Aorta (tissue), 5 donors: ENCODE measurements at regions of chr11 and their contacts with region 1.

Region 1: GRCh38 chr11:15988693-15989231 is 367.6 kb downstream of the SOX6 start:
- DNase-seq: no peak
- ATAC-seq: peak; percentile 38
- H3K4me3 ChIP-seq: no peak overlapping the region
- H3K27ac ChIP-seq: no peak overlapping the region
- H3K4me1 ChIP-seq: no peaks in the 10 kb centered on the region
- H3K27me3 ChIP-seq: no peaks in the 10 kb centered on the region

Region 2: GRCh38 chr11:15819679-15820286 is 169.0 kb before region 1 on chr11:
- intact Hi-C with region 1: loop called in 1 of 2 experiments (anchors 10 kb)
- DNase-seq: peak; percentile 79 to 89
- ATAC-seq: peak; percentile 82
- H3K4me3 ChIP-seq: no peak overlapping the region
- H3K27ac ChIP-seq: no peak overlapping the region
- H3K4me1 ChIP-seq: peaks cover 4 to 7% of the 10 kb centered on the region in 2 donors
- H3K27me3 ChIP-seq: no peaks in the 10 kb centered on the region

Region 3: DNA sequence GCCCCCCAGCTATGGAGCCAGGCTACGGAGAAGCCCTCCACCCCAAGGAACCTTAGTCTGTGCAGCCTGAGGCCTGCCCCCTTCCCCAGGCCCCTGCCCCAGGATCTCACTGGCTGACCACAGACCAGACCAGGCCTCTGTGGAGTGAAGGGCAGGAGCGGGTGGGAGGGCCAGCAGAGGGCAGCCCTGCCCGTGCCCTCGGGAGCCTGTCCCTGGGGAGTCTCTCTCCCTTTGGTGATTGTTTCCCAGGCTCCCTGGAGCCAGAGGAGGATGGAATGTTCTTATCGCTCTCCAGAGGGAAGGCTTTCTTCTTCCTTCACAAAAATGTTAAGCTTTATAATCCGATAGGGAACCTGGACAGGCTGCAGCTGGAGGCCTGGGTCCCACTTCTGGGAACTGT is 87.7 kb before region 1 on chr11:
- intact Hi-C with region 1: loop called in 1 of 2 experiments (anchors 10 kb)
- DNase-seq: no peak
- ATAC-seq: no peak
- H3K4me3 ChIP-seq: no peak overlapping the region
- H3K27ac ChIP-seq: no peak overlapping the region
- H3K4me1 ChIP-seq: no peaks in the 10 kb centered on the region
- H3K27me3 ChIP-seq: no peaks in the 10 kb centered on the region

Region 4: GRCh38 chr11:16356761-16357393 is 368.1 kb after region 1 on chr11:
- intact Hi-C with region 1: no loop called
- DNase-seq: peak in 1 of 2 donors; percentile 46
- ATAC-seq: peak; percentile 73
- H3K4me3 ChIP-seq: no peak overlapping the region
- H3K27ac ChIP-seq: peak overlapping the region in 1 of 2 donors; percentile 51
- H3K4me1 ChIP-seq: peaks cover 0 to 7% of the 10 kb centered on the region in 2 donors
- H3K27me3 ChIP-seq: no peaks in the 10 kb centered on the region

Region 5: DNA sequence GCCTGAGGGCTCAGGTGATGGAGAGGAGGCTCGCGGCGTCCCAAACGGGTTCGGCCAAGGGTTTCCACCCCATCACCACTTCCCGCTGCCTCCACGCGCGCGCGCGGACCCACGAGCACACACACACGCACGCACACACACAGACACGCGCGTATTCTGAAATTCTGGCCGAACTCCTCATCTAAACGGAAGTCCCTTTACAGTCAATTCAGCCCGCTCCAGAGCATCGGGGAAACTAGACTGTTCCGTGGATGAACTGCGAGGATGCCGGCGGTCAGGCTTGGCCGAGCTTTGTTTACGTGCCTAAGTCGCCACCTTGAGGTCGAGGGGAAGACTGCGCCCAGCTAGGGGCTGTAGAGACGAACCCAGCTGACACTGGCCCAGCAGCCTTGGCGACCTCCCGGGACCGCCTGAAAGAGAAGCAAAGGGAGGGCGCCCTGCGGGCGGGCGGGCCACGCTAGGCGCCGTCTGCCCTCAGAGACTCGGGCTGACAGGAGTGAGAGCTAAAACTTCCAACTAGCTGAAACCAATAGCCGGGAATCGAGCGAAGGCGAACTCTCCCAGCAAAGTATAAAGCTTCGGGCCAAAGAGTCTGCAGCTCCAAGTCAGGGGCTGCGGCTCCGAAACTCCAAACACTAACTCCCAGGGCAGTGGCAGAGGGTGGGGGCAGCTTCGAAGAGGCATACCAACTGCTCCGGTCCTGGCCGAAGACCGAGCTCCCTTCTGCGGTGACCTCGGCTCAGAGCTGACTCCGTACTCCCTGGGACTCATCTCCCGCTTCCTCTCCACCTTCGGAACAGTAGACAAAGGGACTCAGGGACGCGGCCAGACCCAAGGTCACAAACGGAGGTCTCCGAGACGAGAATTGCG is 625.0 kb after region 1 on chr11:
- intact Hi-C with region 1: loop called in 1 of 2 experiments (anchors 5 kb)
- DNase-seq: peak; percentile 88 to 93
- ATAC-seq: peak; percentile 97
- H3K4me3 ChIP-seq: peak overlapping the region; percentile 5 to 38
- H3K27ac ChIP-seq: no peak overlapping the region
- H3K4me1 ChIP-seq: no peaks in the 10 kb centered on the region
- H3K27me3 ChIP-seq: peaks cover 0 to 2% of the 10 kb centered on the region in 2 donors